ENCODE measurements at regions of chr19 and their contacts with region 1.

Region 1: GRCh38 chr19:33064792-33065550 is at the start of gene RHPN2:
- DNase-seq: peak; percentile 43
- ATAC-seq: peak; percentile 88
- H3K4me3 ChIP-seq: peak within 1 kb of the TSS; percentile 82 to 96 (median 96)
- H3K27ac ChIP-seq: peak within 1 kb of the TSS; percentile 64
- H3K4me1 ChIP-seq: peaks cover 57% of the 10 kb centered on the region
- H3K27me3 ChIP-seq: no peaks in the 10 kb centered on the region
- CTCF ChIP-seq: 0 out of 2 replicates have a peak, but pooled peaks have one; percentile 7
- EP300 ChIP-seq: no peak
- POLR2A ChIP-seq: peak in 1 of 2 experiments; percentile 85; a peak in 2 of 4 replicates
- RAD21 ChIP-seq: no peak
- total RNA-seq, gene RHPN2: 20.3 and 21.6 TPM in 2 replicates

Region 2: GRCh38 chr19:32971715-32972540 is 93.0 kb before region 1 on chr19 and contains the starts of genes CEP89 and FAAP24:
- CTCF ChIA-PET with region 1: no interaction called
- POLR2A ChIA-PET with region 1: no interaction called
- in situ Hi-C with region 1: no loop called
- intact Hi-C with region 1: loop called (anchors 10 kb)
- DNase-seq: peak; percentile 98
- ATAC-seq: peak; percentile 97
- H3K4me3 ChIP-seq: peak within 1 kb of the TSS; percentile 81 to 93 (median 90)
- H3K27ac ChIP-seq: peak within 1 kb of the TSS; percentile 72
- H3K4me1 ChIP-seq: peaks cover 19% of the 10 kb centered on the region
- H3K27me3 ChIP-seq: no peaks in the 10 kb centered on the region; a peak in 1 of 5 replicates
- CTCF ChIP-seq: peak; percentile 41; the same call in 1 of the 2 replicates
- EP300 ChIP-seq: 0 out of 4 replicates have a peak, but pooled peaks of 1 of the 2 experiments have one; percentile 4
- POLR2A ChIP-seq: peak; percentile 59 to 76
- RAD21 ChIP-seq: no peak
- total RNA-seq, gene CEP89: 10.9 and 13.1 TPM in 2 replicates
- total RNA-seq, gene FAAP24: 6.0 and 10.0 TPM in 2 replicates

Region 3: GRCh38 chr19:33040994-33041827 is 23.8 kb before region 1 on chr19:
- CTCF ChIA-PET with region 1: no interaction called
- POLR2A ChIA-PET with region 1: interaction called, 28 read pairs
- in situ Hi-C with region 1: no loop called
- intact Hi-C with region 1: no loop called
- DNase-seq: peak; percentile 100
- ATAC-seq: peak; percentile 91
- H3K4me3 ChIP-seq: peak overlapping the region in 2 of 3 experiments; percentile 28 to 56; a peak in 5 of 6 replicates
- H3K27ac ChIP-seq: peak overlapping the region; percentile 100
- H3K4me1 ChIP-seq: peaks cover 74% of the 10 kb centered on the region
- H3K27me3 ChIP-seq: no peaks in the 10 kb centered on the region
- CTCF ChIP-seq: no peak
- EP300 ChIP-seq: peak; percentile 90 to 95; a peak in 3 of 4 replicates
- POLR2A ChIP-seq: peak; percentile 65 to 94; a peak in 3 of 4 replicates
- RAD21 ChIP-seq: no peak; the same call in 1 of the 2 replicates

Region 4: GRCh38 chr19:33080761-33081681 is 16.1 kb after region 1 on chr19 and contains the start of gene GPATCH1:
- CTCF ChIA-PET with region 1: no interaction called
- POLR2A ChIA-PET with region 1: interaction called, 3 read pairs
- in situ Hi-C with region 1: no loop called
- intact Hi-C with region 1: loop called (anchors 2 kb)
- DNase-seq: peak; percentile 73
- ATAC-seq: peak; percentile 90
- H3K4me3 ChIP-seq: peak within 1 kb of the TSS; percentile 90 to 100 (median 98)
- H3K27ac ChIP-seq: peak within 1 kb of the TSS; percentile 67
- H3K4me1 ChIP-seq: peaks cover 46% of the 10 kb centered on the region
- H3K27me3 ChIP-seq: no peaks in the 10 kb centered on the region; a peak in 1 of 5 replicates
- CTCF ChIP-seq: no peak; the same call in 1 of the 2 replicates
- EP300 ChIP-seq: no peak
- POLR2A ChIP-seq: peak; percentile 65 to 77
- RAD21 ChIP-seq: peak; percentile 33
- total RNA-seq, gene GPATCH1: 6.8 and 8.8 TPM in 2 replicates

Region 5: DNA sequence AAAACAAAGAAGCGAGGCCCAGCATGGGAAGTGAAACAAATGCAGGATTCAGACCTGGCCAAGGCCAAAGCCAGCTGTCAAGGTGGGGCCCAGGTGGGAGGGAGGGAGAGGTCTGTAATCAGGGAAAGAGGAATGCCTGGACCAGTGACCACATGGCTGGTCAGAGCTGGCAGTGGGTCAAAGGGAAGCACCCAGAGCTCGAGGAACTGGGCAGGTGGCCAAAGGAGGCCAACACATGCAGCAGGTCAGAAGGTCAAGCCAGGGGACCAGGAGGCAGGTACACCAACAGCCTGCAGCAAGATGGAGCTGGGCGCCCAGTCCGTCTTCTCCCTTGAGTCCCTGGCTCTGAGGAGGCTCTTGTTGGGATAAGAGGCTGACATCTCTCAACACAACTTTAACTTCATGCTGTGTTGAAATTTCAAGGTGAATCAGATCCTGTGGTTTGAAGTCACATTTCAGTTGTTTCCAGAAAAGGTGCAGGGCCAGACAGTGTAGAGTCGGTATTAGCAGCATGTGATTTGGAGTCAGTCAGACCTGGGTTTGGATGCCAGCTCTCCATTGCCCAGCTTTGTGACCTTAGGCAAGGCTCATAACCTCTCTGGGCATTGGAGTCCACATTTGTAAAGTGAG is 33.2 kb after region 1 on chr19:
- CTCF ChIA-PET with region 1: no interaction called
- POLR2A ChIA-PET with region 1: no interaction called
- in situ Hi-C with region 1: no loop called
- intact Hi-C with region 1: loop called (anchors 1 kb)
- DNase-seq: peak; percentile 76
- ATAC-seq: peak; percentile 36
- H3K4me3 ChIP-seq: no peak overlapping the region
- H3K27ac ChIP-seq: no peak overlapping the region
- H3K4me1 ChIP-seq: peaks cover 42% of the 10 kb centered on the region
- H3K27me3 ChIP-seq: no peaks in the 10 kb centered on the region
- CTCF ChIP-seq: no peak
- EP300 ChIP-seq: peak in 1 of 2 experiments; percentile 47; a peak in 2 of 4 replicates
- POLR2A ChIP-seq: no peak
- RAD21 ChIP-seq: no peak